Activated CD8-positive, alpha-beta memory T cell treated with anti-CD3 and anti-CD28 coated beads, Interleukin-2, amount 10 ng/mL, durations not matched to agents 7 days and 5 days (primary cell): ENCODE measurements at regions of chr3 and their contacts with region 1.

Region 1: GRCh38 chr3:159884661-159885402 is 103.8 kb upstream of the IL12A start:
- DNase-seq: no peak
- ATAC-seq: peak; percentile 60
- H3K4me3 Mint-ChIP-seq: no peak overlapping the region
- H3K27ac Mint-ChIP-seq: no peak overlapping the region
- H3K4me1 Mint-ChIP-seq: no peaks in the 10 kb centered on the region
- H3K27me3 Mint-ChIP-seq: peaks cover 31% of the 10 kb centered on the region

Region 2: DNA sequence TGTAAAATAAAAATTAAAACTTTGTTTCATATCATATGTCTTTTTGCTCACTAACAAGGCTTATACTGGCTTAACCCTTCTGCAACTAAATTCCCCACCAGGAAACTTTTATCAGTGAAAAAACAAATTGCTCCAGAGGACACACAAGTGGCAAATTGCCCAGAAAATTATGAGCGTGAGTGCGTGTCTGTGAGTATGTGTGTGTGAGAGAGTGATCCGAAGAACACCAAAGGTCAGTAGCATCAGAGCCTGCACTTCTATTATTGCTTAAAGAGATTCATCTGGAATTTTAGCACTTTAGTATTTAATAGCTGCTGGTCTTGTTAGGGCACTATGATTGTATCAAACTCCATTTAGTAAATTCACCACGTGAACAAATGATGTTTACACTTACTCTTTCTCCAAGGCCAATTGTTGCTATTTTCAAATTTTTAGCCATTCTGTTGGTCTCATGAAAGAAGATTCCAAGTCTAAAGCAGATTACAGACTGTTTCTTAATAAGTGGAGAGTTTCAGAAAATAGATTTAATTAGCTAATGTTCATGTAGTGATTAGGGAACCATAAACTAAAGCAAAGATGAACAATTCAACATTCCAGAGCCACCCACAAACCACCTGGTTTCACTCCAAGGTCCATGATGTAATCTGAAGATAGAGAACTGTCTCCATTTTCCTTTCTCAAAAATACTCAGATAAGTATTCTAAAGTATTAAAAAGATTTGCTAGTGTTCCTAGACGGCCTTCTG is 12.7 kb after region 1 on chr3:
- CTCF ChIA-PET with region 1: interaction called, 10 read pairs
- DNase-seq: no peak
- ATAC-seq: no peak
- H3K4me3 Mint-ChIP-seq: no peak overlapping the region
- H3K27ac Mint-ChIP-seq: no peak overlapping the region
- H3K4me1 Mint-ChIP-seq: no peaks in the 10 kb centered on the region
- H3K27me3 Mint-ChIP-seq: peaks cover 46% of the 10 kb centered on the region

Region 3: DNA sequence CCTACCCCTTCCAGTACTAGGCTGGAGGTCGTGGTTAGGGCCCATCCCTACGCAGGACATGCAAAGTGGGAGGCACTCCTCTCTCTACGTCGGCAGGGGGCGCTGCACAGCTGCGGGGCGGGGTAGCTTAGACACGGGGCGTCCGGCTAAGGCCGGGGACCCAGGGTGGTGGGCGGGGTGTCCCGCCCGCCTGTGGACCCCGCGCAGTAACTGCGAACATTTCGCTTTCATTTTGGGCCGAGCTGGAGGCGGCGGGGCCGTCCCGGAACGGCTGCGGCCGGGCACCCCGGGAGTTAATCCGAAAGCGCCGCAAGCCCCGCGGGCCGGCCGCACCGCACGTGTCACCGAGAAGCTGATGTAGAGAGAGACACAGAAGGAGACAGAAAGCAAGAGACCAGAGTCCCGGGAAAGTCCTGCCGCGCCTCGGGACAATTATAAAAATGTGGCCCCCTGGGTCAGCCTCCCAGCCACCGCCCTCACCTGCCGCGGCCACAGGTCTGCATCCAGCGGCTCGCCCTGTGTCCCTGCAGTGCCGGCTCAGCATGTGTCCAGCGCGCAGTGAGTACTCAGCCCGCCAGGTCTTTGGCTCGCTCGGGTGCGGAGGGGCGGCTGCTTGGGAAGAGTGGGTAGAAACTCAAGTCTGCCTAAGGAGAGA is 103.9 kb after region 1 on chr3 and contains the start of gene IL12A:
- CTCF ChIA-PET with region 1: interaction called, 32 read pairs
- DNase-seq: peak; percentile 89
- ATAC-seq: peak; percentile 96
- H3K4me3 Mint-ChIP-seq: peak within 1 kb of the TSS; percentile 76
- H3K27ac Mint-ChIP-seq: peak within 1 kb of the TSS; percentile 66
- H3K4me1 Mint-ChIP-seq: peaks cover 19% of the 10 kb centered on the region
- H3K27me3 Mint-ChIP-seq: peaks cover 8% of the 10 kb centered on the region
- total RNA-seq, gene IL12A: 0.63 to 1.4 TPM

Region 4: DNA sequence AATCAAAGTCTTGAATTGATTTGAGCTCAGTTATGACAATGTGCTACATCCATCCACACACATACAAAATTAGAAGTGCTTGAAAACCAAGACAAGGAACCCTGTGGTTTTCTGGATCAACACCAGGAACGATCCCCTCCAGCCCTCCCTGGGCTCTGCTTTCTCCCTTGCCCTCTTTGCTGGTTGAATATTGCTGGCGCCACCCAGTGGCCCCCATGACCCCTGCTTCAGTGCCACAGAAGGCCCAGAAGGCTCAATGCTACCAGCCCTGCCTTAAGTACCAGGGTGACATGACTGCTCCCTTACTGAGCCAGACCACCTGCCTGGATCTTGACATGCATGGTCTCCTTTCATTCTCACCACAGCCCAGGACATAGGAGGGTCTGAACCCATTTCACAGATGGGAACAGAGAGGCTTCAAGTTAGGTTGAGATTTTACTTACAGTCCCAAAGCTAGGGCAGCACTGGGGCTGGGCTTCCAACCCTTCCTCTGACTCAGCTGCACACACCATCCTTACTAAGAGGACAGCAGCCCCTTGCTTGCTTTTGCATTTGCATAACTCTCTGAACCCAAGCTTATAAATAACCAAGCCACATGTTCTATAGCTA is 118.8 kb after region 1 on chr3:
- CTCF ChIA-PET with region 1: interaction called, 74 read pairs
- DNase-seq: peak; percentile 66
- ATAC-seq: peak; percentile 84
- H3K4me3 Mint-ChIP-seq: no peak overlapping the region
- H3K27ac Mint-ChIP-seq: no peak overlapping the region
- H3K4me1 Mint-ChIP-seq: peaks cover 24% of the 10 kb centered on the region
- H3K27me3 Mint-ChIP-seq: peaks cover 5% of the 10 kb centered on the region

Region 5: DNA sequence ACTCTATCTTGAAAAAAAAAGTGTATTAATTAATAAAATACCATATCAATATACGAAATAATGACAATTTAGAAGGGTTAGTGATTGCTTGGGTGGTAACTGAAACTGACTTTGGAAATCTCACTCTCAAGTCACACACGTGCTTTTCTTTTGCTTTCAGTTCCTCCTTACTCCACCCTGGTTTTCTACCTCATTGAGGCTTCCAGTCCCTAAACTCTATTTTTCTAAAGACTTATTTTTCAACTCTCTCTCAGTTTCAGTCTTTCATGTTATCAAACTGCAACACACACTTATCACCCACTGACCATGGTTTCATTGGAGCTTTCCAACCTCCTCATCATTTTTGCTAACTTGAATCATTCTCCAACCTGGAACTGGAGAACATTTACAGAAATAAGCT is 127.3 kb after region 1 on chr3:
- CTCF ChIA-PET with region 1: interaction called, 74 read pairs
- DNase-seq: no peak
- ATAC-seq: peak; percentile 81
- H3K4me3 Mint-ChIP-seq: no peak overlapping the region
- H3K27ac Mint-ChIP-seq: peak overlapping the region; percentile 74
- H3K4me1 Mint-ChIP-seq: peaks cover 44% of the 10 kb centered on the region
- H3K27me3 Mint-ChIP-seq: no peaks in the 10 kb centered on the region